GM18951 (cell line): ENCODE measurements at regions of chr12 and their contacts with region 1.

Region 1: GRCh38 chr12:31659087-31659933 is at the start of gene ETFBKMT:
- POLR2A ChIP-seq: peak; percentile 66

Region 2: GRCh38 chr12:31906557-31907301 is 247.4 kb after region 1 on chr12:
- in situ Hi-C with region 1: no loop called
- POLR2A ChIP-seq: no peak

Region 3: DNA sequence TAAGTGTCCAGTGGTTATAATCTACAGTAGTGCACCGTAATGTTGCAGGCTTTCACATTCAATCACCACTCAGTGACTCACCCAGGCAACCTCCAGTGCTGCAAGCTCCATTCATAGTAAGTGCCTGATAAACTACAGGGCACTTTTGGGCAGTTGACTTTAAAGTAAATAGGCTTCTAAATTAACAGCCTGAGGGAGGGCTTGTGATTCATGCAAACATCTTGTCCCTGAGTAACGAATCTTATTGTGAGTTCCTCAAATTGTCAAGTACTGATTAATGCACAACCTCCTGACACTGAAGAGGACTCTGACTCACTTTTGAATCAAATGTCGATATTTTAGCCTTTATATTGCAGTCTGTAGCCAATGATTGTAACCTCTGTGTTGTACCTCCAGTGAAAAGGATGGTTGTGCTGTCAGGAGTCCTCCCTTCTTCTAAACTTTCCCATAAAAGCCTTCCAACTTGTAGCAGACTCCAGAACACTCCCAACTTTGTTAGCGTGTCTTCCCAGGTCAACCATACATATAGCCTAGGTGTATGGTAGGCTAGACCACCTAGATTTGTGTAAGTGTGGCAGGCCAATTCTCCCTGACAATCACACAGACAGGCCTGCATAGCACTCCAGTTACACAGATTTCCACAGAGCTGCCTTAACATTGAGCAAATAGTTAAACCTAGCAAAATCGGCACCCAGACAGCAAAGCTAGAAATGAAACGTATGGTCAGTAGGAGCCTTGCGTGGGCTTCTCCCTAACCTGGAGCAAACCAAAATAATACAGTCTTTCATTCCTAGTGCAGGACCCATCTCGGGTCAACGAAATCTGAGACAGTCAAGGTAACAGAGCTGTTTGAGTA is 392.5 kb after region 1 on chr12:
- in situ Hi-C with region 1: loop called (anchors 25 kb)
- POLR2A ChIP-seq: no peak

Region 4: DNA sequence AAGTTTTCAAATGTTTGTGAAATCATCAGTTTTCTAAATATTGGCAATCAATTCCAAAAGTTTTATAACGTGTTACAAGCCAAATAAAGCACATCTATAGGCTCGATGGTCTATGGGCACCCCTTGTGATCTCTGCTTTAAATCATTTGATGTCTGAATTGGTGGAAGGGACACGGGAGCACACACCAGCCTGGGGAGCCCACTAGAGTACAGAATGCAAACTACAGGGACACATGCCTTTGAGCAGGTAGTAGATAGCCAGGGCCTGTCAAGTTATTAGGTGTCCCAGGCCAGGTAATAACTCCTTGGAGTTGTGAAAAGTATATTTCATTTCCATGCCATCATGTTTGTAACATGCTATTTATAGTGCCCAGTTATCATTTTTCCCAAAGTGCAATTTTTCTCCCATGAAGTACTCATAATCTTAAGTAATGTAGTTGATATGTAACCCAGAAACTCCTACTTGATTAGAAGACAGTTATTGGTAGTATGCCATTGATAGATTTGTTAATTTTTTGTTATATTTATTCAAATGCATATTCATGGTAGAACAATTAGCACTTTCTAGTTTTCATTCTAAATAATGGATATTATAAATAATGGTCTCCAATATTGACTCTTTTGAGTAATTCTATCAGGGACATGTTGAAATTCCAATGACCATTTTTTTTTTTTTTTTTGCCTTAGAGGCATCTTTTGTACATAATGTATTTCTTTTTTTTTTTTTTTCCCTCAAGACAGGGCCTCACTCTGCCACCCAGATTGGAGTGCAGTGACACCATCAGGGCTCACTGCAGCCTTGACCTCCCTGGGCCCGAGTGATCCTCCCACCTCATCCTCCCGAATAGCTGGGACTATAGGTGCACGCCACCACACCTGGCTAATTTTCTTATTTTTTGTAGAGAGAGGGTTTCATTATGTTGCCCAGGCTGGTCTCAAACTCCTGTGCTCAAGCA is 643.2 kb after region 1 on chr12:
- in situ Hi-C with region 1: loop called (anchors 10 kb)
- POLR2A ChIP-seq: no peak

Region 5: GRCh38 chr12:32743264-32743663 is 1084.0 kb after region 1 on chr12:
- in situ Hi-C with region 1: loop called (anchors 10 kb)
- POLR2A ChIP-seq: no peak